ENCODE measurements at regions of chr1 and their contacts with region 1.

Region 1: GRCh38 chr1:235328357-235329138 is at the start of gene GGPS1:
- DNase-seq: peak; percentile 98 to 99
- ATAC-seq: peak; percentile 91 to 94 (median 93)
- H3K4me3 ChIP-seq: peak within 1 kb of the TSS; percentile 90
- H3K27ac ChIP-seq: peak within 1 kb of the TSS; percentile 92
- H3K4me1 ChIP-seq: peaks cover 55% of the 10 kb centered on the region
- H3K27me3 ChIP-seq: no peaks in the 10 kb centered on the region
- CTCF ChIP-seq: no peak
- total RNA-seq, gene GGPS1: 21.1 to 39.5 (median 28.9) TPM

Region 2: GRCh38 chr1:235138821-235139220 is 189.7 kb before region 1 on chr1:
- intact Hi-C with region 1: no loop called
- DNase-seq: no peak
- ATAC-seq: no peak
- H3K4me3 ChIP-seq: no peak overlapping the region
- H3K27ac ChIP-seq: no peak overlapping the region
- H3K4me1 ChIP-seq: peaks cover 3% of the 10 kb centered on the region
- H3K27me3 ChIP-seq: no peaks in the 10 kb centered on the region
- CTCF ChIP-seq: no peak

Region 3: DNA sequence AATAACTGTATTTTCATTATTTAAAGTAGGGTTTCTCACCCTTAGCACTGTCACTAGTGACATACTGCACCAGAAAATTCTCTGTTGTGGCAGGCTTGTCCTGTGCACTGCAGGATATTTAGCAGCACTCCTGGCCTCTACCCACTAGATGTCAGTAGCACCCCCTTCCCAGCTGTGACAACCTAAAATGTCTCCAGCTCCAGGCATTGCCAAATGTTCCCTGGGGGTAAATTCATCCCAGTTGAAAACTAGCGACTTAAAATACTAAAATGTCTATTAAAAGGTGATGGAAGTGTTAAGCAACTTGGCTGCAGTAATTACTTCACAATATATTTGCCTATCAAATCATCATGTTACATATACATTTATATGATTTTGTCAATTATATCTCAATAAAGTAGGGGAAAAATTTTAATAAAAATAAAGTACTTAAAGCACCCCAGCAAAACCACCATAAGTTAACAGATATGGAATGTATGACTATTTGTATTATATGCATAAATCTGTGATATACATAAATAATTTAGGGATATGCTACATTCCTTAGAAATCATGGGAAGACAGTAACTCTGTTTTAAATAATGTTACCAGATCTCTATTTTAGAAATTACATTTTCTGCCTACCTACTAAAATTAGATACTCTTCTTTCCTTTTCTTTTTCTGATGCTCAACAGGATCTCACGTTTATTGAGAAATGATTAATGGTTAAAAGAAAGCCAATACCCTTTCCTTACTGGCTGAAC is 75.2 kb before region 1 on chr1:
- intact Hi-C with region 1: loop called in 1 of 2 experiments (anchors 2 kb)
- DNase-seq: peak; percentile 45 to 68
- ATAC-seq: peak; percentile 88 to 98 (median 98)
- H3K4me3 ChIP-seq: no peak overlapping the region
- H3K27ac ChIP-seq: no peak overlapping the region
- H3K4me1 ChIP-seq: peaks cover 9% of the 10 kb centered on the region
- H3K27me3 ChIP-seq: no peaks in the 10 kb centered on the region
- CTCF ChIP-seq: peak; percentile 83

Region 4: GRCh38 chr1:235367000-235367908 is 38.7 kb after region 1 on chr1 and contains the start of gene TBCE:
- intact Hi-C with region 1: loop called (anchors 2 to 5 kb)
- DNase-seq: peak; percentile 97 to 98
- ATAC-seq: peak; percentile 99 to 100 (median 100)
- H3K4me3 ChIP-seq: peak within 1 kb of the TSS; percentile 78
- H3K27ac ChIP-seq: peak within 1 kb of the TSS; percentile 87
- H3K4me1 ChIP-seq: no peaks in the 10 kb centered on the region
- H3K27me3 ChIP-seq: no peaks in the 10 kb centered on the region
- CTCF ChIP-seq: no peak
- total RNA-seq, gene TBCE: 20.6 to 26.8 (median 24.1) TPM

Region 5: DNA sequence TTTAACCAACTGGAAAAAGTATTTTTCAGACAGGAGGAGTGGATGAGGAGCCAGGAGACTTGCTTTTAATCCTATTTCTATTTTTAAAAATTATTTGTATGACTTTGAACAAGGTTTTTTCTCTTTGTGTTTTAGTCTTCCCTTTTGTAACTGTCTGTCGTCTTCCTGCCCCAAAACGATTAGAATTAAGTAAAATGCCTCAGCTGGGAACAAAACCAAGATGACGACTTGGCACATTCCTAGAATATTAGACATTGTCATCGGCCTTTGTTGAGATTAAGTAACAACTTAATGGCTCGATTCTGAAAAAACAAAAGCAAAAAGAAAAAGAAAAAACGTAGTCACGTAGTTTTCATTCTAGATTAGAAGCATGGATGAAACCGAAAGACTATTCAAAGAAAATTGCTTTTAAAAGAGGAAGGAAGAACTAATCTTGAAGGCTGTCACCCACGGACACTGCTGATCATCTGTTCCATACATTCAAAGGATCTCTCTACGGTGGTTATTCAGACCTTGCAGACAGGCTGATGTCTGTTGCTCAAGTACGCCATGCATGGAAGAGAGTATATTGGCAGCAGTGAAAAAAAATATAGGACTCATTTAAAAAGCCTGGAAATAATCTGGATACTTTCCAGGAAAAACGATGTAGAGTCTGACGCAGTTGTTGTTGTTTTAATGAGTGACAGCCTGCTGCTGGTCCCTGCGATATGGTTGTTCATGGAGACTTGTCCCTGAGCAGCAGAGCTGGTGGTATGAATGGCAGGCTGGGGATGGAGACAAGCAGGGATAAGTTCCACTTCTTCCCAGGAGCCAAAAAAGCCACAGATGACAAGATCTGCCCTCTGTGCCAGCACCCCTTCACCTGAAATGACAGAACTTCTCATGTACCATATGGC is 304.2 kb after region 1 on chr1:
- intact Hi-C with region 1: no loop called
- DNase-seq: no peak
- ATAC-seq: no peak
- H3K4me3 ChIP-seq: peak overlapping the region; percentile 25
- H3K27ac ChIP-seq: no peak overlapping the region
- H3K4me1 ChIP-seq: no peaks in the 10 kb centered on the region
- H3K27me3 ChIP-seq: peaks cover 0 to 7% (median 6%) of the 10 kb centered on the region in 3 donors
- CTCF ChIP-seq: no peak

Region 6: DNA sequence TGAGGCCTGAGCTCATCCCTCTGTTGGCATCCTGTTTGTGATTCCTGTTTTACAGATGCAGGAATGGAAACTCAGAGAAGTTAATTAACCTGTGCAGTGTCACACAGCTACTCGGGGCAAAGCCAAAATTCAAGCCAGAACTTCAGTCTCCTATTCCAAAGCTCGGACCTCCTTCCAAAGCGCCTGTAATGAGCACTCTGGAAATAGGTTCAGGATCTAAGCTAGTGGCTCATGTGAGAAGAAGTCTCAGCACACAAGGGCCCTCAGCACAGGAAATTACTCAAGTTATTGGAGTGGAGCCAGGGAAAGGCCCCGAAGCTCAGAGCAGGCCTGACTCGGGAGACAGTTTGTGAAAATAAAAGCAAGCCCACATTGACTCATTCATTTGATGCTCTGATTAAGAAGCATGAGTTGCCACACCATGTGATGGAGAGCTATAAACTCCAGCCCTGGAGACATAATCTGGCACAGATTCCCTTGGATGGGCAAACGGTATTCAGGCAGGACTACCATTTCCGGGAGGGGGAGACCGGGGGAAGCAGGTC is 588.8 kb after region 1 on chr1:
- intact Hi-C with region 1: no loop called
- DNase-seq: peak; percentile 59 to 73
- ATAC-seq: peak; percentile 72 to 90 (median 88)
- H3K4me3 ChIP-seq: no peak overlapping the region
- H3K27ac ChIP-seq: peak overlapping the region; percentile 66
- H3K4me1 ChIP-seq: peaks cover 11% of the 10 kb centered on the region
- H3K27me3 ChIP-seq: no peaks in the 10 kb centered on the region
- CTCF ChIP-seq: no peak